A549 (cell line): ENCODE measurements at regions of chr14 and their contacts with region 1.

Region 1: DNA sequence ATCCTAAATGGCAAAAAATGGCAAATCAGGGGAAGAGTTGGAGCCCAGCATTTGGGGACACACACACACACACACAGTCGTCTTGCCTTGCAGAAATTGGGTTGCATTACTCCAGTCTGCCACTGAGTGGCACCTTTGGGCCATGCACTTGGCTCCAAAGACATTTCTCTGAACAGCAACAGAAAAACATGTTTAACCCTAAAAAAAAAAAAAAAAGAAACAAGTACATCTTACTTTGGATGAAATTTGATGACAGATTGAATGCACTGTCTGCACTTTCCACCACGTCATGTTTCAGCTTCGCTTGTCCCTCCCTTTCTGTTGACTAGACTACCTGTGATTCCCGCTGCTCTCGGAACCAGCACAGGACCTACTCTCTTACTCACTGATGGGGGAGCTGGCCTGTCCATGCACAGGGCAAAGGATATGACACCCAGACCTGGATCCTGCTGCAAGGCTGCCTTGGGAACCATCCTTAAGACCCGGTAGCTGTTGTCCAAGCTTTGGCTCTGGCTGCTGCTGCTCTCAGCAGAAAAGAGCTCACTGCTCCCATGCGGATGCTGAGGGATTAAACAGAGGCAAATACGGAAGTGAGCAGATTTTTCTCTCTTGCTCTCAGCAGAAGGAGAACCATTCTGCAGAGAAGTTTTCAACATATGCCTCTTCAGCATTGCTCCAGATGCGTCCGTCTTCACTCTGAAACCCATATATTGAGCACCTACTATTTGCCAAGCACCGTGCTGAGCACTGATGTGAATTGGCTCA is 376.8 kb downstream of the DPF3 start:
- DNase-seq: peak in 1 of 2 experiments; percentile 68
- ATAC-seq: peak; percentile 52 to 85; a peak in 4 of 6 replicates
- H3K4me3 ChIP-seq: no peak overlapping the region
- H3K27ac ChIP-seq: no peak overlapping the region
- H3K4me1 ChIP-seq: no peaks in the 10 kb centered on the region
- CTCF ChIP-seq: peak; percentile 86
- EP300 ChIP-seq: no peak
- POLR2A ChIP-seq: no peak
- RAD21 ChIP-seq: peak; percentile 92 to 93

Region 2: DNA sequence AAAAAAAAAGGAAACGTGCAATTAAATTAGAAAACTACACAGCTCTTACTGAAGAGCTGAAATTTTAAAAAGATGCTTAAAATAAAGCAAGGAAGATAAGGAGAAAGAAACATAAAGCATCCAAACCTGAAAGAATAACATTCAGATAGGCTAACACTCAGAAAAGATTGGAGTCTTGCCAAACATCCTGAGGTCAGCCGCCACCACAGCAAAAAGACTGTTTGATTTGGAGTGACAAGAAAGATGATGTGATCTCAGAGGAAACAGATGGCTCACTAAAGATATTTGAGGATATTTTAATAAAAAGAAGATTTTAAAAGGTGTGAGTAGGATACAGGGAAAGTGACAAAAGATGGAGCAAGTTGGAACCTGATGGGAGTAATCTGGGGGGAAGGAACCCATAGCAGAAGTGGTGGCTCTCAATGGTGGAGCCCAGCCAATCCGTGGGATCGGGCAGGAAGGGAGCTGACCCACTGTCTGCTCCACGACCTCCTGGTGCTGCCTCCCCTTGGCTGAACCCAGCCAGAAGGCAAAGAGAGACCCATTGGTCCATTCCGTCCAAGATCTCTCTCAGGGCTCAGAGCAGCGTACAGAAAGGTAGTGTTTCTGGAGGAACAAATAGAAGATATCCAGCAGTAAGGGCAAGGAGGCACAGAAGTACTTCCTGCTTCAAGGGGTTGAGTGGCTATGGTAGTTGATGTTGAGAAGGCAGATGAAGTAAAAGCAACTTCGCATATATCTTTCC is 115.3 kb before region 1 on chr14:
- CTCF ChIA-PET with region 1: no interaction called
- POLR2A ChIA-PET with region 1: no interaction called
- DNase-seq: no peak
- ATAC-seq: no peak
- H3K4me3 ChIP-seq: no peak overlapping the region
- H3K27ac ChIP-seq: no peak overlapping the region
- H3K4me1 ChIP-seq: no peaks in the 10 kb centered on the region
- CTCF ChIP-seq: no peak
- EP300 ChIP-seq: no peak
- POLR2A ChIP-seq: no peak
- RAD21 ChIP-seq: no peak

Region 3: DNA sequence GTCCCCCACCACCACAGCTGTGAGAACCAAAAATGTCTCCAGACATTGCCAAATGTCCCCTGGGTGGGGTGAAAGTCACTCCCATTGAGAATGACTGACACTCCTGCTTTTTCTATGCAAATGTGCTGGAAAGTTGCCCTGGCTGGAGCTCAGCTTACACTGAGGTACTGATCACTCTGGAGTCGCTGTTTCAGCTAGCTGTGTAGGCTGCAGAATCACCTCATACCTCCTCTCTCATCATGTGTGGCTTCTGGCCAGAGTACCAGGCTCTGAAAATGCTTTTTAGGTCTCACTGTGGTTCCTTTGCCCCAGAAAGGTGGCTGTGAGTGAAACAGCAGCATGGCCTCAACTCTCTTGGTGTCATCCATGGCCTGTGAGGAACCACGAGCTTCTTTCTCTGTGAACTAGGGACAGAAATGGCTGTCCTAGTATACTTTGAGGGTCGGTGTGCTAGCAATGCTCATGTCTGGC is 37.6 kb before region 1 on chr14:
- CTCF ChIA-PET with region 1: interaction called, 11 read pairs
- POLR2A ChIA-PET with region 1: no interaction called
- DNase-seq: no peak
- ATAC-seq: peak in 1 of 2 experiments; percentile 12; a peak in 1 of 6 replicates
- H3K4me3 ChIP-seq: no peak overlapping the region
- H3K27ac ChIP-seq: no peak overlapping the region
- H3K4me1 ChIP-seq: no peaks in the 10 kb centered on the region
- CTCF ChIP-seq: no peak
- EP300 ChIP-seq: no peak
- POLR2A ChIP-seq: no peak
- RAD21 ChIP-seq: no peak

Region 4: DNA sequence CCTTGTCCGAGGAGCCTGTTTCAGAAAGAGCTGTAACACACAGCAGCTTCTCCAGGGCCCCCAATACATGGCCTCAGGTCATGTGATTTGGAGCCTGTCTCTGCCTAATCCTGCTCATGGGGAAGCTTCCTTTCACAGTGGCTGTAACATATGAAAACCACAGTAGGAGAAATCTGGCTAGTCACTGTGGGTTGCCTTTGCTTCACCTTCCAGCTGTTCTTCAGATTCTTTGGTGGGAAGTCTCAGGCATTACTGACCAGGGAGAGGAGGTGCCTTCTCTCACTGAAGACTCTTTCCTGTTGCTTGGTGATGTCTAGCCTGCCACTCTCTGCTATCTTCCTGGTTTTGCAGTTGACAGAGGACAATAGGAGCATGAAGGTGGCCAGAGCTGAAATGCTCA is 26.2 kb after region 1 on chr14:
- CTCF ChIA-PET with region 1: interaction called, 10 read pairs
- POLR2A ChIA-PET with region 1: no interaction called
- DNase-seq: no peak
- ATAC-seq: no peak
- H3K4me3 ChIP-seq: no peak overlapping the region
- H3K27ac ChIP-seq: no peak overlapping the region
- H3K4me1 ChIP-seq: no peaks in the 10 kb centered on the region
- CTCF ChIP-seq: no peak
- EP300 ChIP-seq: no peak
- POLR2A ChIP-seq: no peak
- RAD21 ChIP-seq: no peak

Region 5: GRCh38 chr14:72893636-72894321 is 376.7 kb after region 1 on chr14 and contains the start of gene DPF3:
- CTCF ChIA-PET with region 1: interaction called, 480 read pairs
- POLR2A ChIA-PET with region 1: interaction called, 3 read pairs
- DNase-seq: peak; percentile 90 to 97
- ATAC-seq: peak; percentile 95 to 99
- H3K4me3 ChIP-seq: peak within 1 kb of the TSS; percentile 60
- H3K27ac ChIP-seq: peak within 1 kb of the TSS in 1 of 2 experiments; percentile 18; a peak in 2 of 6 replicates
- H3K4me1 ChIP-seq: peaks cover 18% of the 10 kb centered on the region
- CTCF ChIP-seq: no peak
- EP300 ChIP-seq: no peak
- POLR2A ChIP-seq: no peak
- RAD21 ChIP-seq: no peak
- polyA plus RNA-seq, gene DPF3: 0.05 and 0.28 TPM in 2 replicates

Region 6: DNA sequence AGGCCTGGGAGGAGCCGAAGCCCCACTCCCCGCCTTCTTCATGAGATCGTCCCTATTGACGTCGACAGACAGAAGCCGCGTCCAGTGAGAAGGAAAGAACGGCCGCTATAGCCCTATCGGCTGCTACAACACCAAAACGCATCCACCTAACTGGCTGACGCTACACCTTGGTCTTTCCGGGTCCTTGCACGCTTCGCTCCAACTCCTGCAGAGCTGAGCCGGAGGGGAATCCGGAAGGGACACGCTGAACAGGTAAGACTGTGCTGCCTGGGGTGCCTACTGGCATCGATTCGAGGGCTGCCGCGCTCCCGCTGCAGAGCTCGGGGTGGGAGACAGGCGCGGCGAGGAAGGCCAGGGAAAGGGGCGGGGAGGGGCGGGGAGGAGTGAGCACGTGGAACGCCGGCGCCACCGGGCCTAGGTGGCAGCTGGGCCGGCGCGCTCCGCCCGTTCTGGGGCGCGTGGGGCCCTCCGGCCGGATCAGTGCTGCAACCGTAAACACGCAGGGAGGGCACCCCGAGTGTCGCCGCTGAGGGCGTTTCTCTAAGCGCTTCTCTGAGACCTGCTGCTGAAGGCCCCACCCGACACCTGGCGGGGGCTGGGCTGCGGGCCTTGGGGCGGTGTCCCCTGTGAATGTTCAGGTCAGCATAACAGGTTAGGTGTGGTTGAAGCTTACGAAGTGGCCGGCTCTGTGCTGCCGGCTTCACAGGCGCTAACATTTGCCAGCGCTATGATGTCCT is 409.3 kb after region 1 on chr14 and contains the start of gene DCAF4:
- CTCF ChIA-PET with region 1: interaction called, 14 read pairs
- POLR2A ChIA-PET with region 1: no interaction called
- DNase-seq: peak; percentile 98 to 99
- ATAC-seq: peak; percentile 96 to 97
- H3K4me3 ChIP-seq: peak within 1 kb of the TSS; percentile 67
- H3K27ac ChIP-seq: peak within 1 kb of the TSS; percentile 71 to 82
- H3K4me1 ChIP-seq: peaks cover 5% of the 10 kb centered on the region; the same call in 1 of the 3 replicates
- CTCF ChIP-seq: no peak
- EP300 ChIP-seq: no peak
- POLR2A ChIP-seq: peak; percentile 27; the same call in 1 of the 2 replicates
- RAD21 ChIP-seq: no peak
- polyA plus RNA-seq, gene DCAF4: 21.0 and 22.4 TPM in 2 replicates

Region 7: DNA sequence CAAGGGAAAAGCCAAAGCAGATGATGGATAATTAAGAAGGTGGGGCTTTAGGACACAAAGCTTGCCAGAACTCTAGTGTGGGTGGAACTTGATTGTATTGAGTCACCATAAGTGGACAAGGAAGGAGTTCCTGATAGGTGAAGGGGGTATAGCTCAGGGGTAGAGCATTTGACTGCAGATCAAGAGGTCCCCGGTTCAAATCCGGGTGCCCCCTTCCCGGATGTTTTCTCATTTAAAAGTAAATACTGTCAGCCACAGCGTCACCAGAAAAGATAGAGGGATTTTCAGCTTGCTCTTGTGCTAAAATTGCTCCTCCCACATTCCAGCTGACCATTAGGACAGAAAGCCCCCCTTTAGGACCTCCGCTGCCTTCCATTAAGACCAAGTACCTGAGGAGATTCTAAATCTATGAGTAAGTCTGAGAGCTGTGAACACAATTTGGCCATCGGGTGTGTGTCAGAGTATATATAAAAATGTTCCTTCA is 445.8 kb after region 1 on chr14:
- CTCF ChIA-PET with region 1: interaction called, 16 read pairs
- POLR2A ChIA-PET with region 1: no interaction called
- DNase-seq: peak; percentile 81 to 84
- ATAC-seq: peak; percentile 42 to 79; a peak in 5 of 6 replicates
- H3K4me3 ChIP-seq: no peak overlapping the region
- H3K27ac ChIP-seq: no peak overlapping the region
- H3K4me1 ChIP-seq: peaks cover 14% of the 10 kb centered on the region
- CTCF ChIP-seq: no peak
- EP300 ChIP-seq: no peak
- POLR2A ChIP-seq: no peak
- RAD21 ChIP-seq: no peak